GM10248 (cell line): ENCODE measurements at regions of chr20 and their contacts with region 1.

Region 1: GRCh38 chr20:18488301-18488700 is 8.7 kb downstream of the RBBP9 start:
- DNase-seq: no peak
- CTCF ChIP-seq: no peak

Region 2: DNA sequence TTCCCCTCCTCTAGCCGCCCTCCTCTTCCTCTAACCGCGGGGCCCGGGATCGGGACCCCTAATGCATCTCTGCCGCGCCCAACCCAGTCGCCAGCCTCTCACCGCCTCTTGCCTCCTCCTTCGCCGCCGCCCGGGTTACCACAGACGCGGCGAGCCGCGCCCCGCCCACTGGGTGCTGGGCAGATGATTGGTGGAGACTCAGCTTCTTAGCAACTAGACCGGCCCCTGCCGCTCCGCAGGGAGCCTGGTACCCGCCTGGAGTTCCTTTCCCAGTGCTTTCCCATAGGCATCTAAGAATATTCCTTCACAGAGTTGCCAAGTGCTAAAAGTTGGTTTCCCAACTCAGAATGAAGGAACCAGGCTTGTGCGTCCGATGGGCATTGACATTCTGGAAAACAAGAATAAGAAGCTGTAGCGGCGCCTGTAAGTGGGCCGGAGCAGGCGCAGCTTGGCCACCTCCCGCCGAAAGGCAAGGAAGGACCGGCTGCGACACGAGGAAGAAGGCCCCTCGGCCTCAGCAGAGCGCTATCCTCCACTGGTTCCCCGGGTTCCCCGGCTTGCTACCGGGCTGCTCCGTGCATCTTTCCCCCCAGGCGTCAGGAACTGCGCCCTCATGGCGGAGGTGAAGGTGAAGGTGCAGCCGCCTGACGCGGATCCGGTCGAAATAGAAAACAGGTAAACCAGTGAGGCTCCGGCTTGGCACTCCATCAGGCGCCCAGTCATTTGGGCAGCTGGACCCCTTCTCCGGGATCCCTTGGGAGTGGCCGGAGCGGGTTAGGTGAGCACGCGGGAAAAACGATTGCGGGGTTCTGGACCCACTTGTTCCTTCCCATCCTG is 21.2 kb before region 1 on chr20 and contains the starts of genes DZANK1 and POLR3F:
- CTCF ChIA-PET with region 1: interaction called, 12 read pairs
- POLR2A ChIA-PET with region 1: no interaction called
- DNase-seq: peak; percentile 98
- CTCF ChIP-seq: no peak

Region 3: DNA sequence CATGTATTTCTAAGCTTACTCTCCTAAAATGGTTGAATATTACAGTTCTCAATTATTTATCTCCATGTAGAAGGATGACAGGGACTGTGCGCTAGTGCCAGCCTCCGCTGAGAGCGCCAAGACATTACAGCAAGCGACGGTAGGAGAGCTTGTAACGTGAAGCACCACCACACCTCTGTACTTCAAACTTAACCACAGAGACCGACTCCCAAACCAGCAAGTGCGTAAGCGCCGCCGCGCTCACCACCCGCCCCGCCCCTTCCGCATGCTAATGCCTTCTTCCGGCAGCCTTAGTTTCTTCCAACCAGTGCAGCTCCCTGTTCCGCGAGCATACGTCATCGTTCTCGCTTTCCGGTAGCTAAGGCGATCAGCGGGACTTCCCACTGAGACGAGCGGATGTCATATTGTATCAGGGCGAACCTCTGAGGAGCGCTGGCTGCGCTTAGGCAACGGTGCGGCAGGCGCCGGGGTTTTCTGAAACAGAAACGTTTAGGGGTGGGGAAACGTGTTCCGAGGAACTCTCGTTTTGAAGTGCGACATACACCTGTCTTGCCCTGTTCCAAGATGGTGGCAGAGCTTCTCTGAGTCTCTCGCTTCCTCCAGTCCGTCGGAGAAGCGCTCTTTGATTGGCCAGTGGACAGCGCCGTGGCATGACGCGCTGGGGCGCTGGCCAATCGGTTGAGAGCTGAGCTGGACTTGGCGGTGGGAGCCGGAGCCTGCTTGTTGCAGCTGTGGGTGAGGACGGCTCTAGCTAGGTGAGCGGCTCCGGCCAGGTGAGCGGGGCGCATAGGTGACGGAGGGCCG is 19.1 kb after region 1 on chr20 and contains the start of gene SEC23B:
- CTCF ChIA-PET with region 1: no interaction called
- POLR2A ChIA-PET with region 1: no interaction called
- DNase-seq: peak; percentile 95
- CTCF ChIP-seq: no peak

Region 4: DNA sequence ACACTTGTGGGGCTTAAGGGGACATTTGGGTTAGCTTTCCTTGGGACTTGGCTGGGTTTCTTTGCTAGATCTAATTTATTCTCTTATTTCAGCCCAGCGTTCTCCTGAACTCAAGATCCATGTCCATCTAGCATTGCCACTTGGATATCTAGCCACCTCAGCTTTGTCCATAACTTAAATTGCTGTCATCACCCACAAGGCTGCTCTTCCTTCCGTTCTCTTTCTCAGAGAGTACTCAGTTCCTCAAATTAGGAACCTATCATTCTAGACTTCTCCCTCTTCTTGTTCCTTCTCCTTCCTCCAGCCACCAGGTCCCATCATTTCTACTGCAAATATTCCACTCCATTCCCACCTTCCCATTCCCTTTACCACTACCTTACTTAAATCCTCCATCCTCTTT is 83.3 kb after region 1 on chr20:
- CTCF ChIA-PET with region 1: no interaction called
- POLR2A ChIA-PET with region 1: no interaction called
- DNase-seq: no peak
- CTCF ChIP-seq: no peak